ENCODE measurements at regions of chr12 and their contacts with region 1.

Region 1: DNA sequence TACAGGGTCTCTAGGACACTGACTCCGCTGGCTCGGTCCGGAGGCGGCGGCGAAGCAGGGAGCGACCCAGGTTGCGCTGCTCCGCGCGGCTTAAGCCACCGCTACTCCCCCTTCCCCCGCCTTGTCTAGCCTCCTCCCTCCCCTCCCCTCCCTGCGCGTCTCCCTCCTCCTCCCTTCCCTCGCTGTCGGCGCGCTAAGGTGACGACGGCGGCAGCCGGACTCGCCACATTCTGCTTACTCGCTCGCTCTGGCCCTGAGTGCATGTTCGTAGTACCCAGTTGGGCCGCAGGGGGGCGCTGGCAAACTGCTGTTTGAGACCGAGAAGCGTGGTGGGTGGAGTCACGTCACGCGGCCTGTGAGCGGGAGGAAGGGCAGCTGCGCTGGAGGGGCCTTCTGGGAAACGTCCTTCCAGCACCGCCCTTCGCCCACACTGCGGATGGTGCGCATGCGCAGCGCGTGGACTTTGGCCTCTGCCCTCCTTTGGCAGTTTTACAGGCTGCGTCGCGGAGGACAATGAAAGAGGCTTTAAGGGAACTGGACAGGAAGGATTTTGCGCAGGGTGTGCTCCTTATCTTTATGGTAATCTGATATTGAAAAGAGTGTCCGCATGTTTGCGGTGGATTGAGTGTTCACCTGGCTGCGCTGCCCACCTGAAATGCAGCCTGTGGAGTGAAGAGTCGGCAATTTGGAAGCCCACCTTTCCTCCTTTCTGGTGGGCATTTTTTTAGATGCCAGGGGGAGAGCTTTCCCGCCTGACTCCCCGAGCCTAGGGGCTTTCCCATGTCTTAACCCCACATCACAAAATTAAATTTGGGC is at the start of gene SCAF11:
- DNase-seq: peak; percentile 100
- ATAC-seq: peak; percentile 83
- H3K4me3 Mint-ChIP-seq: peak within 1 kb of the TSS; percentile 96
- H3K27ac Mint-ChIP-seq: peak within 1 kb of the TSS; percentile 98
- H3K4me1 Mint-ChIP-seq: peaks cover 47% of the 10 kb centered on the region
- H3K27me3 Mint-ChIP-seq: no peaks in the 10 kb centered on the region
- CTCF ChIP-seq: no peak
- total RNA-seq, gene SCAF11: 180 and 198 TPM in 2 replicates

Region 2: DNA sequence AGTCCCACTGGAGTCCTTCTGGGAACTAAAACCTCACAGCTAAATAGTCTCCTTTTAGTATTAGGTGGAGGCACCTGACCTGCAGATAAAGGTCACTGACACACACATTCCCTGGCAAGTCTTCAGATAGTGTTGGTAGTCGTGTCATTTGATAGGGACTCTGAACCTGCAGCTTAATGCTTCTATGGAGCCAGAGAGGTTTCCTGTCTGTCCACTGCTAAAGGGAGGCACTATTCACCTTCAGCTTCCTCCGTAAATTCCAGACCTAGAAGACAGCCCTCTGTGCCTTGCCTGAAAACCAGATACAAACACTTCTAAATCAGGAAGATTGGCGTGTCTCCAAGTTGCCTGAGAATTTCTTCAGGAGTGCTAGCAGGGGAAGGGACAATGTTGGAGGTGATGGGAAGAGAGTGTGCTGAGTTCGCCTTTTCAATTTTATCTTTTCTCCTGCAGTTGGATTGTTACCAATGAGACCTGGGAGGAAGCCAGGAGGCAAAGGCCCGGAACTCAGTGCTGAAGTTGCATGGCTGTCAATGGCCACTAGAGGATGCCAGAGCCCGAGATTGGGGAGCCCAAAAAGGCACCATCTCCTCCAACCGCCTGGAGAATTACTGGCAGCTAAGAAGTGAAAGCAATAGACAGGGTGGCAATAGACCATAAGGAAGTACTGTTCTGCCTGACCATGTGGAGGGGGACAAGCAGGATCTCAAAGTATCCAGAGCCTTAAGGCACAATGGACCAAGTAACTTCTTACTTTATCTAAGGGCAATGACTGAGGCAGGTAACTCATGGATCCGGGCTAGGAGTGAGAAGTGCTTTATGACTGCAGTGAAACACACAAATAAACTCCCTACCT is 81.3 kb after region 1 on chr12:
- CTCF ChIA-PET with region 1: interaction called, 3 read pairs
- POLR2A ChIA-PET with region 1: interaction called, 6 read pairs
- intact Hi-C with region 1: loop called (anchors 1 kb)
- DNase-seq: peak; percentile 39
- ATAC-seq: peak; percentile 96
- H3K4me3 Mint-ChIP-seq: no peak overlapping the region
- H3K27ac Mint-ChIP-seq: peak overlapping the region; percentile 61
- H3K4me1 Mint-ChIP-seq: peaks cover 12% of the 10 kb centered on the region
- H3K27me3 Mint-ChIP-seq: peaks cover 4% of the 10 kb centered on the region
- CTCF ChIP-seq: peak; percentile 88

Region 3: GRCh38 chr12:46084666-46085631 is 94.3 kb after region 1 on chr12:
- CTCF ChIA-PET with region 1: no interaction called
- POLR2A ChIA-PET with region 1: no interaction called
- intact Hi-C with region 1: no loop called
- DNase-seq: no peak
- ATAC-seq: no peak
- H3K4me3 Mint-ChIP-seq: no peak overlapping the region
- H3K27ac Mint-ChIP-seq: no peak overlapping the region
- H3K4me1 Mint-ChIP-seq: peaks cover 9% of the 10 kb centered on the region
- H3K27me3 Mint-ChIP-seq: no peaks in the 10 kb centered on the region
- CTCF ChIP-seq: no peak

Region 4: GRCh38 chr12:46268590-46269558 is 278.2 kb after region 1 on chr12 and contains the start of gene SLC38A1:
- CTCF ChIA-PET with region 1: no interaction called
- POLR2A ChIA-PET with region 1: interaction called, 20 read pairs
- intact Hi-C with region 1: loop called (anchors 1 kb)
- DNase-seq: peak; percentile 77
- ATAC-seq: peak; percentile 71
- H3K4me3 Mint-ChIP-seq: no peak within 1 kb of the TSS
- H3K27ac Mint-ChIP-seq: no peak within 1 kb of the TSS
- H3K4me1 Mint-ChIP-seq: peaks cover 22% of the 10 kb centered on the region
- H3K27me3 Mint-ChIP-seq: no peaks in the 10 kb centered on the region
- CTCF ChIP-seq: no peak
- total RNA-seq, gene SLC38A1: 283 and 314 TPM in 2 replicates

Region 5: GRCh38 chr12:46661110-46661845 is 670.6 kb after region 1 on chr12:
- CTCF ChIA-PET with region 1: no interaction called
- POLR2A ChIA-PET with region 1: no interaction called
- intact Hi-C with region 1: loop called (anchors 2 kb)
- DNase-seq: no peak
- ATAC-seq: peak; percentile 94
- H3K4me3 Mint-ChIP-seq: peak overlapping the region; percentile 3
- H3K27ac Mint-ChIP-seq: no peak overlapping the region
- H3K4me1 Mint-ChIP-seq: peaks cover 31% of the 10 kb centered on the region
- H3K27me3 Mint-ChIP-seq: no peaks in the 10 kb centered on the region
- CTCF ChIP-seq: no peak

Region 6: DNA sequence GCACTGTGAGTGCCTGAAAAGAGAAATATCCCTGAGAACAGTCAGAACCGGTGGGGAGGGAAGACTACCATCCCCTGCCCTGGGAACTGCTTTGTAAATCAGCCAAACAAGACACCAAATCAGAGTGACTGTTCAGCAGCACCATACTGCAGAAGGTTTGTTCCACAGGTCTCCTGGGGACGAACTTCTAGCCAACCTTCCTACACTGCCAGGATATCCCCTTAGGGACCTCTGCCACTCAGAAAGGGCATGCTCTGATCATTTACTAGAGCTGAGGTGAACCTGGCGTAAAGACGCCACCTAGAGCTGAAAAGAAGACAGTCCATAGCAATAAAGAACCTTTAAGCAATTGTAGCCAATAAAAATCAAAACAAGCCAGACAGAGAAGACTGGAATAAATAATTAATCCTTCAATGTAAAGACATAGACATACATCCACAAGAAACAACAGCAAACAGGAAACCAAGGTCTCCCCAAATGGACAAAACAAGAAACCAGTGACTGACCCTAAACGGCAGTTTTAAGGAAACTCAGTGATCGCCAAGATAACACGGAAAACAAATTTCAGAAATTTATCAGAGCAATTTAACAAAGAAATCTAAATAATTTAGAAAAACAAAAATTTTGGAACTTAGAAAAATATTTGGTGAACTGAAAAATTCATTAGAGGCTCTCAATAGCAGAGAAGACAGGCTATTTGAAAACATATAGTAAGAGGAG is 1317.2 kb after region 1 on chr12:
- CTCF ChIA-PET with region 1: no interaction called
- POLR2A ChIA-PET with region 1: no interaction called
- intact Hi-C with region 1: loop called (anchors 10 kb)
- DNase-seq: peak; percentile 33
- ATAC-seq: peak; percentile 88
- H3K4me3 Mint-ChIP-seq: peak overlapping the region; percentile 95
- H3K27ac Mint-ChIP-seq: peak overlapping the region; percentile 94
- H3K4me1 Mint-ChIP-seq: peaks cover 67% of the 10 kb centered on the region
- H3K27me3 Mint-ChIP-seq: no peaks in the 10 kb centered on the region
- CTCF ChIP-seq: peak; percentile 36

Region 7: GRCh38 chr12:47812797-47813510 is 1822.3 kb after region 1 on chr12:
- CTCF ChIA-PET with region 1: no interaction called
- POLR2A ChIA-PET with region 1: no interaction called
- intact Hi-C with region 1: loop called (anchors 5 kb)
- DNase-seq: peak; percentile 83
- ATAC-seq: peak; percentile 74
- H3K4me3 Mint-ChIP-seq: peak overlapping the region; percentile 84
- H3K27ac Mint-ChIP-seq: peak overlapping the region; percentile 99
- H3K4me1 Mint-ChIP-seq: peaks cover 97% of the 10 kb centered on the region
- H3K27me3 Mint-ChIP-seq: no peaks in the 10 kb centered on the region
- CTCF ChIP-seq: no peak

Measured in activated B cell treated with CpG ODN at 0.5 μM for 24 hours (primary cell).